ENCODE measurements at regions of chr9 and their contacts with region 1.

Region 1: GRCh38 chr9:70111042-70111602 is 67.5 kb downstream of the MAMDC2 start:
- DNase-seq: peak; percentile 39
- H3K4me3 ChIP-seq: no peak overlapping the region
- H3K27ac ChIP-seq: no peak overlapping the region; a peak in 1 of 4 replicates
- H3K4me1 ChIP-seq: peaks cover 0 to 5% of the 10 kb centered on the region in 2 experiments; a peak in 2 of 4 replicates
- H3K27me3 ChIP-seq: no peaks in the 10 kb centered on the region
- CTCF ChIP-seq: peak; percentile 91
- EP300 ChIP-seq: no peak
- RAD21 ChIP-seq: peak; percentile 79

Region 2: GRCh38 chr9:69932901-69933300 is 178.2 kb before region 1 on chr9:
- CTCF ChIA-PET with region 1: interaction called, 11 read pairs
- POLR2A ChIA-PET with region 1: no interaction called
- DNase-seq: no peak
- H3K4me3 ChIP-seq: no peak overlapping the region
- H3K27ac ChIP-seq: no peak overlapping the region
- H3K4me1 ChIP-seq: no peaks in the 10 kb centered on the region
- H3K27me3 ChIP-seq: no peaks in the 10 kb centered on the region
- CTCF ChIP-seq: peak; percentile 35
- EP300 ChIP-seq: no peak
- RAD21 ChIP-seq: peak; percentile 38; the same call in 1 of the 2 replicates

Region 3: DNA sequence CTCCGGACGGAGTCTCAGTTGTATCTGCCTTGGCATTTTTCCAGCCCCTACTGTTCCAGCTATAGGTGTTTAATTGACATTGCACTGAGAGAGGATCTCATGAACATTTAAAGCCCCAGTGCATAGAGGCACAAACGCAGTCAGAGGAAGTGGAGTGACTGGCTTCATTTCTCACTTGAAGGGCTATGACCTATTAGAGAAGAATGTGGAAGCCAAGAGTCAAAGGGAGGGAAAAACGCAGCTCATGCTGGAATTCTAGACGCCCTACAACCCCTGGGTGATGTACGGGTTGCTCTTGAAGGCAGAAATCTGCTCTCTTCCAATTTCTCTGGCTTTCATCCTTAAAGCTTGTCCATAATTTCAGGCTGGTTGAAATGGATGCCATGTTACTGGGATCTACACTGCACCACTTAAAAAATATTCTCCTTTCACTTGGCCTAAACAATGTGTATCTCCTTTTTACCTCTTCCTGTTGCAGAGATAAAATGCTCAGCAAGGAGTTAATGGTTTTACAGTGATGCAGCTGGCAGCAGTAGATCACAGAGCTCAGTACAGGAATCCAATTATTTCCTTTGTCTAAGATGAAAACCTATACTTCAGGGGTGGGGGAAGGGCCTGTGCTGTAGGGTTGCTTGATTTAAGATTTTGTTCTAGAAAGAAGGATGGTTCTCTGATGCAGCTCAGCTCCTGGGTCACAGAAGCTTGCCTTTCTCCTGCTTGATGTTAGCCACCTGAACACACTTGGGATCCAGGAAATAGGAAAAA is 129.3 kb before region 1 on chr9:
- CTCF ChIA-PET with region 1: interaction called, 433 read pairs
- POLR2A ChIA-PET with region 1: no interaction called
- DNase-seq: no peak
- H3K4me3 ChIP-seq: no peak overlapping the region
- H3K27ac ChIP-seq: peak overlapping the region in 1 of 2 experiments; percentile 51; a peak in 2 of 4 replicates
- H3K4me1 ChIP-seq: peaks cover 3 to 14% of the 10 kb centered on the region in 2 experiments; a peak in 3 of 4 replicates
- H3K27me3 ChIP-seq: no peaks in the 10 kb centered on the region
- CTCF ChIP-seq: no peak
- EP300 ChIP-seq: no peak
- RAD21 ChIP-seq: no peak

Region 4: GRCh38 chr9:70013598-70014196 is 97.4 kb before region 1 on chr9:
- CTCF ChIA-PET with region 1: interaction called, 10 read pairs
- POLR2A ChIA-PET with region 1: no interaction called
- DNase-seq: peak; percentile 52
- H3K4me3 ChIP-seq: no peak overlapping the region
- H3K27ac ChIP-seq: peak overlapping the region; percentile 5 to 15; a peak in 2 of 4 replicates
- H3K4me1 ChIP-seq: peaks cover 4 to 11% of the 10 kb centered on the region in 2 experiments; a peak in 1 of 4 replicates
- H3K27me3 ChIP-seq: no peaks in the 10 kb centered on the region
- CTCF ChIP-seq: no peak
- EP300 ChIP-seq: peak; percentile 87 to 91
- RAD21 ChIP-seq: no peak

Region 5: DNA sequence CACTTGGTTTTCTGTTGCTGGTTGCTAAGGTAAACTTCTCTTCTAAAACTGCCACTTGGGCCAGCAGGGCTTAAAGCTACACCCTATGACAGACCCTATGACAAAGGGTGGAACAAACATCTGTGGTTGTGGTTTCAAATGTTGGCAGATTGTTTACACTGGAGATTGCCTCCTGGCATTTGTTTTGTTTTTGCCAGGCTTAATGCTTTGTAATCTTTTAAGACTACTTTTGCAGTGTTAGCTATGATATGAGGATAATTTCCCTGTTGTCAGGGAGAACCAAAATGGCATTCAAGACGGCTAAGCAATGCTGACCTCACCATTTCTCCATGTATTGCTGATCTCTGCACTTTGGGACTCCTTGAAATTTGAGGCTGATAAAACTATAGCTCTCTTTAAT is 17.2 kb before region 1 on chr9:
- CTCF ChIA-PET with region 1: interaction called, 14 read pairs
- POLR2A ChIA-PET with region 1: no interaction called
- DNase-seq: no peak
- H3K4me3 ChIP-seq: no peak overlapping the region
- H3K27ac ChIP-seq: no peak overlapping the region
- H3K4me1 ChIP-seq: no peaks in the 10 kb centered on the region
- H3K27me3 ChIP-seq: no peaks in the 10 kb centered on the region
- CTCF ChIP-seq: no peak
- EP300 ChIP-seq: no peak
- RAD21 ChIP-seq: no peak

Region 6: GRCh38 chr9:70229579-70229978 is 118.5 kb after region 1 on chr9:
- CTCF ChIA-PET with region 1: interaction called, 26 read pairs
- POLR2A ChIA-PET with region 1: no interaction called
- DNase-seq: no peak
- H3K4me3 ChIP-seq: no peak overlapping the region
- H3K27ac ChIP-seq: no peak overlapping the region; a peak in 1 of 4 replicates
- H3K4me1 ChIP-seq: no peaks in the 10 kb centered on the region
- H3K27me3 ChIP-seq: no peaks in the 10 kb centered on the region
- CTCF ChIP-seq: peak; percentile 67
- EP300 ChIP-seq: no peak
- RAD21 ChIP-seq: peak; percentile 70

Region 7: DNA sequence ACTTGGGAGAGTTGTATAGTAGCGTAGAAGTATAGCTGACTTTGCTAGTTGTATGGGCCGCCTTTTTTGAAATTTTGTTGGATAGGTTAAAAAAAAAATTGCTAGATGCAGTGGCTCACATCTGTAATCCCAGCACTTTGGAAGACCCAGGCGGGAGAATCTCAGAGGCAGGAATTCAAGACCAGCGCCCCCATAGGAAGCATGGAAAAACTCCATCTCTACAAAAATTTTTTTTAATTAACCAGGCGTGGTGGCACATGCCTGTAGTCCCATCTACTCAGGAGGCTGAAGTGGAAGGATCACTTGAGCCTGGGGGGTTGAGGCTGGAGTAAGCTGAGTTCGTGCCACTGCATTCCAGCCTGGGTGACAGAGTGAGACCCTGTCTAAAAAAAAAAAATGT is 206.9 kb after region 1 on chr9:
- CTCF ChIA-PET with region 1: no interaction called
- POLR2A ChIA-PET with region 1: no interaction called
- DNase-seq: no peak
- H3K4me3 ChIP-seq: no peak overlapping the region
- H3K27ac ChIP-seq: no peak overlapping the region
- H3K4me1 ChIP-seq: 0 out of 4 replicates have a peak, but pooled peaks cover 0 to 4% of the 10 kb centered on the region in 2 experiments
- H3K27me3 ChIP-seq: no peaks in the 10 kb centered on the region
- CTCF ChIP-seq: peak; percentile 18; the same call in 1 of the 2 replicates
- EP300 ChIP-seq: no peak
- RAD21 ChIP-seq: no peak

Region 8: GRCh38 chr9:70578720-70579119 is 467.6 kb after region 1 on chr9:
- CTCF ChIA-PET with region 1: no interaction called
- POLR2A ChIA-PET with region 1: no interaction called
- DNase-seq: no peak
- H3K4me3 ChIP-seq: no peak overlapping the region
- H3K27ac ChIP-seq: no peak overlapping the region
- H3K4me1 ChIP-seq: peaks cover 0 to 14% of the 10 kb centered on the region in 2 experiments; a peak in 2 of 4 replicates
- H3K27me3 ChIP-seq: no peaks in the 10 kb centered on the region
- CTCF ChIP-seq: no peak
- EP300 ChIP-seq: no peak
- RAD21 ChIP-seq: no peak

Measured in SK-N-SH (cell line).